SK-N-SH (cell line): ENCODE measurements at regions of chr3 and their contacts with region 1.

Region 1: DNA sequence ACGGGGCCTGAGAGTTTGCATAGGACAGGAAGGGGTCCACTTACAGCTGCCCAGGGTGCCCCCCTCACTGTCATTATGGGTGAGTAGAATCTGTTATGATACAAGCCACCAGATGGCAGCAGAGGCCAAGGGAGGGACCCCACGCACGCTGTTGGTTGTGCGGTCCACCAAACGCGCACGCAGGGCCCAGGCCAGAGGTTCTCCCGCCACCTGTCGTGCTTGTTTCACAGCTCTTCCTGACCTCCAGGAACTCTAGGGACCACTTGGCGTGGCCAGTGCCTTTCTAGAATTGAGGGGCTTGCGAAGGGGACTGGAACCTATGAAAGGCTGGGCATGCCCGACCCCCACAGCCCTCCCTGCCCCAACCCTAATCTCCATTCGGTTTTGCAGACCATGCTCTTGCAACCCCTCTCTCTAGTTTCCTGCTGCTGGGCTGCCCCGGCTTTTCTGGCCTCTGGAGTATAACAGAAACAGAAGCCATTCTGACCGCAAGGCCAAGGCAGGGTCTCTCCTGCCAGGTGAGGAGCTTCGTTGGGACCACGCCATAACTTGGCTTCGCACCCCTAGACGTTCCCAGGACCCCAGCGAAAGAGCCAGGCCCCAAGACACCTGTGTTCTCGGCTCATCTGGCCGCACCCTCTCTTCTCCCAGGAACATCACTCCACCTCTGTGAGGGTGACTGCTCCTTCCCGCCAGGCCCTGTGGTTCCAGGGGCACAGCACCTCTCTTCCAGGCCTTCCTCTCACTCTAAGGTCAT is 46.0 kb downstream of the ALDH1L1 start:
- DNase-seq: peak; percentile 87
- H3K4me3 ChIP-seq: no peak overlapping the region; a peak in 1 of 4 replicates
- H3K27ac ChIP-seq: no peak overlapping the region
- H3K4me1 ChIP-seq: peaks cover 0 to 7% of the 10 kb centered on the region in 2 experiments; a peak in 1 of 4 replicates
- H3K27me3 ChIP-seq: no peaks in the 10 kb centered on the region
- CTCF ChIP-seq: peak; percentile 75
- EP300 ChIP-seq: no peak
- RAD21 ChIP-seq: peak; percentile 92

Region 2: GRCh38 chr3:126113733-126114442 is 20.5 kb before region 1 on chr3:
- CTCF ChIA-PET with region 1: interaction called, 25 read pairs
- POLR2A ChIA-PET with region 1: no interaction called
- DNase-seq: peak; percentile 66
- H3K4me3 ChIP-seq: no peak overlapping the region
- H3K27ac ChIP-seq: no peak overlapping the region
- H3K4me1 ChIP-seq: no peaks in the 10 kb centered on the region
- H3K27me3 ChIP-seq: no peaks in the 10 kb centered on the region; the same call in 1 of the 2 replicates
- CTCF ChIP-seq: peak; percentile 45
- EP300 ChIP-seq: no peak
- RAD21 ChIP-seq: peak; percentile 30

Region 3: DNA sequence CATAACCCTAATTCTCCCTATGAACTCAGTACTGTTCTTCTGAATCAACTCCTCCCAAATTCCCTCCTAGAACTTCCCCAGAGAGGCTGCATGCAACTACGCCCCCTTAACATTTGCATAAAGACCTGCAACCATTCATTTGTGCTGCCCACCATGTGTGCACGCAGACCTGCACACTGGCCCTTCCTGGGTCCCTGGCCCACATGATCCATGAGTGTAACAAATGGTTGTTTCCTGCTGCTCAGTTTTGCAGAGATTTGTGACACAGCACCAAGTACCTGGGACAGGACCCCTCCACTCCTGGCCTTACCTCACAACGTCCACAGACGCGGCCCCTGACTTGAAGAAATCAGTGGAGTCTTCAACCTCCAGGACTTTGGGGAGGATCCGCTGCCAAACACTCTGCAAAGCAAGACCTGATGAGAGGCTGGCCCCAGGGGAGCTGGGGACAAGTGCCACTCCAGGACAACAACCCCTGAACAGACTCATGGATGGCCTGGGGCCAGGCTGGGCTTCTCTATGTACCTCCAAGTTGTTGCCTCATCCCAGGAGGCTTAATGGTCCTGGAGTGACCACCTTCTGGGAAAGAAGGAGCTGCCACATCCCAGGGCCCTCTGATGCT is 12.2 kb after region 1 on chr3:
- CTCF ChIA-PET with region 1: interaction called, 72 read pairs
- POLR2A ChIA-PET with region 1: no interaction called
- DNase-seq: no peak
- H3K4me3 ChIP-seq: no peak overlapping the region
- H3K27ac ChIP-seq: no peak overlapping the region
- H3K4me1 ChIP-seq: no peaks in the 10 kb centered on the region
- H3K27me3 ChIP-seq: peaks cover 14% of the 10 kb centered on the region; the same call in 1 of the 2 replicates
- CTCF ChIP-seq: no peak
- EP300 ChIP-seq: no peak
- RAD21 ChIP-seq: no peak

Region 4: GRCh38 chr3:126184465-126185000 is 50.1 kb after region 1 on chr3:
- CTCF ChIA-PET with region 1: interaction called, 13 read pairs
- POLR2A ChIA-PET with region 1: no interaction called
- DNase-seq: no peak
- H3K4me3 ChIP-seq: no peak overlapping the region
- H3K27ac ChIP-seq: no peak overlapping the region
- H3K4me1 ChIP-seq: peaks cover 0 to 9% of the 10 kb centered on the region in 2 experiments; a peak in 1 of 4 replicates
- H3K27me3 ChIP-seq: peaks cover 54% of the 10 kb centered on the region
- CTCF ChIP-seq: no peak
- EP300 ChIP-seq: no peak
- RAD21 ChIP-seq: no peak

Region 5: GRCh38 chr3:126212602-126213378 is 78.4 kb after region 1 on chr3:
- CTCF ChIA-PET with region 1: interaction called, 77 read pairs
- POLR2A ChIA-PET with region 1: no interaction called
- DNase-seq: peak; percentile 89
- H3K4me3 ChIP-seq: peak overlapping the region; percentile 10 to 46; a peak in 2 of 4 replicates
- H3K27ac ChIP-seq: no peak overlapping the region
- H3K4me1 ChIP-seq: peaks cover 13 to 18% of the 10 kb centered on the region in 2 experiments; a peak in 2 of 4 replicates
- H3K27me3 ChIP-seq: no peaks in the 10 kb centered on the region
- CTCF ChIP-seq: peak; percentile 24
- EP300 ChIP-seq: no peak
- RAD21 ChIP-seq: peak; percentile 41

Region 6: GRCh38 chr3:126389112-126389793 is 254.9 kb after region 1 on chr3:
- CTCF ChIA-PET with region 1: interaction called, 79 read pairs
- POLR2A ChIA-PET with region 1: no interaction called
- DNase-seq: peak; percentile 93
- H3K4me3 ChIP-seq: peak overlapping the region; percentile 28 to 39; a peak in 3 of 4 replicates
- H3K27ac ChIP-seq: no peak overlapping the region
- H3K4me1 ChIP-seq: peaks cover 0 to 25% of the 10 kb centered on the region in 2 experiments; a peak in 2 of 4 replicates
- H3K27me3 ChIP-seq: no peaks in the 10 kb centered on the region
- CTCF ChIP-seq: peak; percentile 74
- EP300 ChIP-seq: no peak
- RAD21 ChIP-seq: peak; percentile 85